HCT116 (cell line): ENCODE measurements at regions of chr11 and their contacts with region 1.

Region 1: GRCh38 chr11:13335319-13335718 is 57.7 kb downstream of the BMAL1 start:
- DNase-seq: no peak
- ATAC-seq: peak; percentile 23
- H3K4me3 ChIP-seq: no peak overlapping the region
- H3K27ac ChIP-seq: no peak overlapping the region
- H3K4me1 ChIP-seq: peaks cover 80 to 91% of the 10 kb centered on the region in 2 experiments
- H3K27me3 ChIP-seq: no peaks in the 10 kb centered on the region
- CTCF ChIP-seq: peak; percentile 70 to 92 (median 90)
- POLR2A ChIP-seq: no peak
- RAD21 ChIP-seq: peak; percentile 83

Region 2: GRCh38 chr11:11681536-11681935 is 1653.8 kb before region 1 on chr11:
- CTCF ChIA-PET with region 1: no interaction called
- POLR2A ChIA-PET with region 1: no interaction called
- RAD21 ChIA-PET with region 1: interaction called in 1 of 2 experiments, 12 read pairs
- intact Hi-C with region 1: no loop called
- DNase-seq: no peak
- ATAC-seq: no peak
- H3K4me3 ChIP-seq: no peak overlapping the region
- H3K27ac ChIP-seq: no peak overlapping the region
- H3K4me1 ChIP-seq: no peaks in the 10 kb centered on the region
- H3K27me3 ChIP-seq: no peaks in the 10 kb centered on the region
- CTCF ChIP-seq: no peak
- POLR2A ChIP-seq: no peak
- RAD21 ChIP-seq: no peak

Region 3: GRCh38 chr11:13210424-13210823 is 124.9 kb before region 1 on chr11:
- CTCF ChIA-PET with region 1: interaction called, 70 read pairs
- POLR2A ChIA-PET with region 1: interaction called, 6 read pairs
- RAD21 ChIA-PET with region 1: interaction called, 5 to 11 read pairs
- intact Hi-C with region 1: loop called (anchors 1 kb)
- DNase-seq: peak; percentile 79
- ATAC-seq: peak; percentile 76
- H3K4me3 ChIP-seq: no peak overlapping the region
- H3K27ac ChIP-seq: no peak overlapping the region
- H3K4me1 ChIP-seq: peaks cover 15 to 59% of the 10 kb centered on the region in 2 experiments
- H3K27me3 ChIP-seq: no peaks in the 10 kb centered on the region
- CTCF ChIP-seq: peak; percentile 74 to 94 (median 79)
- POLR2A ChIP-seq: no peak
- RAD21 ChIP-seq: peak; percentile 98

Region 4: GRCh38 chr11:13216019-13216710 is 119.2 kb before region 1 on chr11:
- CTCF ChIA-PET with region 1: interaction called, 70 read pairs
- POLR2A ChIA-PET with region 1: interaction called, 6 read pairs
- RAD21 ChIA-PET with region 1: interaction called in 1 of 2 experiments, 3 read pairs
- intact Hi-C with region 1: no loop called
- DNase-seq: peak; percentile 94
- ATAC-seq: peak; percentile 92
- H3K4me3 ChIP-seq: peak overlapping the region; percentile 24 to 44
- H3K27ac ChIP-seq: peak overlapping the region; percentile 72
- H3K4me1 ChIP-seq: peaks cover 23 to 53% of the 10 kb centered on the region in 2 experiments
- H3K27me3 ChIP-seq: no peaks in the 10 kb centered on the region
- CTCF ChIP-seq: no peak
- POLR2A ChIP-seq: no peak
- RAD21 ChIP-seq: no peak

Region 5: GRCh38 chr11:13261591-13262061 is 73.7 kb before region 1 on chr11:
- CTCF ChIA-PET with region 1: interaction called, 7 read pairs
- POLR2A ChIA-PET with region 1: interaction called, 3 read pairs
- RAD21 ChIA-PET with region 1: no interaction called
- intact Hi-C with region 1: loop called (anchors 1 kb)
- DNase-seq: peak; percentile 86
- ATAC-seq: peak; percentile 89
- H3K4me3 ChIP-seq: peak overlapping the region in 1 of 2 experiments; percentile 21; a peak in 3 of 4 replicates
- H3K27ac ChIP-seq: peak overlapping the region; percentile 32
- H3K4me1 ChIP-seq: peaks cover 21 to 43% of the 10 kb centered on the region in 2 experiments
- H3K27me3 ChIP-seq: peaks cover 10% of the 10 kb centered on the region; the same call in 1 of the 2 replicates
- CTCF ChIP-seq: no peak
- POLR2A ChIP-seq: no peak
- RAD21 ChIP-seq: no peak

Region 6: GRCh38 chr11:13277768-13278613 is 57.3 kb before region 1 on chr11 and contains the start of gene BMAL1:
- CTCF ChIA-PET with region 1: interaction called, 3 read pairs
- POLR2A ChIA-PET with region 1: no interaction called
- RAD21 ChIA-PET with region 1: no interaction called
- intact Hi-C with region 1: loop called (anchors 2 kb)
- DNase-seq: no peak
- ATAC-seq: peak; percentile 28
- H3K4me3 ChIP-seq: peak within 1 kb of the TSS; percentile 70 to 79
- H3K27ac ChIP-seq: peak within 1 kb of the TSS; percentile 60
- H3K4me1 ChIP-seq: peaks cover 19 to 34% of the 10 kb centered on the region in 2 experiments
- H3K27me3 ChIP-seq: peaks cover 28% of the 10 kb centered on the region
- CTCF ChIP-seq: no peak
- POLR2A ChIP-seq: no peak
- RAD21 ChIP-seq: no peak
- total RNA-seq, gene BMAL1: 17.6 TPM

Region 7: GRCh38 chr11:13318498-13319295 is 16.6 kb before region 1 on chr11:
- CTCF ChIA-PET with region 1: interaction called, 11 read pairs
- POLR2A ChIA-PET with region 1: no interaction called
- RAD21 ChIA-PET with region 1: no interaction called
- intact Hi-C with region 1: no loop called
- DNase-seq: no peak
- ATAC-seq: no peak
- H3K4me3 ChIP-seq: no peak overlapping the region
- H3K27ac ChIP-seq: no peak overlapping the region
- H3K4me1 ChIP-seq: no peaks in the 10 kb centered on the region; a peak in 1 of 4 replicates
- H3K27me3 ChIP-seq: no peaks in the 10 kb centered on the region
- CTCF ChIP-seq: no peak
- POLR2A ChIP-seq: no peak
- RAD21 ChIP-seq: no peak